Prostate gland (tissue), 2 donors: ENCODE measurements at regions of chr4 and their contacts with region 1.

Region 1: DNA sequence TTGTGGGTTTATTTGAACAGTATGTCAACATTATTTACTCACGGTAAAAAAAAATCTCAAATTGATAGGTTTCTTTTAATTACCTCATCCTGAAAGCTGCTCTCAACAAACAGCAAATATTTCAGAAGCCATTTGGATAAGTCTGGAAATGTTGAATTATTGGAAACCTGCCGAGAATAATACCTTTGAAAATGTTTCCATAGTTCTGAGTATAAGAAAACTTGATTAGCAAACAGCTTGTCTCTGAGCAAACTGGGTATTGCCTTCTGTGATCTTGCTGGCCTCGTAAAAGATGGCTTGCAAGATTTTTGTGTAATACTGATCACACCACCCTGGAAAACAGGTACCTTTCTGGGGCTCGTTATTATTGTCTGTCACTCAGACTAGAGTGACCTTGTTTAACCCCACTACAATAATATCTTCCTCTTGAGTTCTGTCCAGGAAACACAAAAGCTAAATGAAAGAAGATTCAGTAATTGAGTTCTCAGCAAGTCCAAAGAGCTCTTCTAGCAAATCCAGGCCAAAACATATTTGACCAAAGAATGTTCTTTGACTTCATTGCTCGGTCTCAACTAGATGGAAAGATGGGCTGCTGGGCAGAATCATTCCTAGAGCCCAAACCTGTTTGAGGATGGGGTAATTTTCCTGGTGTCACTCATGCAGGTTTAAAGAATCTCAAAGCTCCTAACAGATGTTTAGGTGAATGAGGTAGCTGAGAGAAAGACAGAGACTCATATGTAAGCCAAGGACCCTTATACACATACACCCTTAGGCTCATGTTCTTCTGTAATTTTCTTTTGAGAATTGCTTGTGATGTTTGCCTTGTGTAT is 255.6 kb upstream of the JADE1 start:
- DNase-seq: peak; percentile 55
- H3K4me3 ChIP-seq: peak overlapping the region; percentile 38 to 40
- H3K27ac ChIP-seq: peak overlapping the region; percentile 89 to 96
- H3K4me1 ChIP-seq: no peaks in the 10 kb centered on the region
- H3K27me3 ChIP-seq: no peaks in the 10 kb centered on the region
- CTCF ChIP-seq: no peak
- POLR2A ChIP-seq: no peak

Region 2: DNA sequence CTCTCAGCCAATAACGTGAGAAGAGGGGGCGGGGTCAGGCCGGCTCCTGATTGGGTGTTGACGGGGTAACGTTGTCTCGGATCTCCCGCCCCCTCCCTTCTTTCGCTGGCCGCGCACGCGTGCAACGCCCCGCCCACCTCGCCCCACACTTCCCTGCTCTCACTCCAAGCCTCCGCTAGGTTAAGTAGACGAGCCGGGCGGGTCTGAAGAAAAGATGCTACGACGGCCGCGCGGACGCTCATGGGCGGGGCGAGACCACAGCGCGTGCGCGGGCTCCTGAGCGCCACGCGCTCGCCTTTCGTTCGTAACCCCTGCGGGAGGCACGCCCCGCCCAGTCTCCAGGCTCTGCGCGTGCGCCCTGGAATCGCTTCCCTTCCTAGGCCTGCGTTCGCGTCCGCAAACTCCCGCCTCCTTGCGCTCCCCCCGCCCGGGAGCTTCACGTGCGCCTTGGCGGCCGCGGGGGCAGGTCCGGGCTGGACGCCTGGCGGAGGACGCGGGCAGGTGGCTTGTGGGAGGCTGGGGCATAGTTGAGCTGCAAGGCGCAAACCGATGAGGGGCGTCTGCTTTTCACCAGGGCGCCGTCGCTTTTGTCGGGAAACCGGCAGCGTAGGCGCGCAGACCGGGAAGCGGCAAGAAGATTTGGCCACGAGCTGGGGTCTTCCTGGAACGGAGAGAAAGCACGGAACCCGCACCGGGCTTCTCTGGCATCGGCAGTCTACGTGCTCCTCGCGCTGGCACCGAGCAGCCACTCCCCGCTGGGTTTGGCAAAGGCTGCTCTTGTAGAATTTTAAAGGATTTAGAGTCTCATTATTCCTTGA is 265.8 kb before region 1 on chr4:
- intact Hi-C with region 1: loop called (anchors 5 kb)
- DNase-seq: peak; percentile 99
- H3K4me3 ChIP-seq: peak overlapping the region; percentile 84 to 89
- H3K27ac ChIP-seq: peak overlapping the region; percentile 90 to 94
- H3K4me1 ChIP-seq: no peaks in the 10 kb centered on the region
- H3K27me3 ChIP-seq: no peaks in the 10 kb centered on the region
- CTCF ChIP-seq: peak in 3 of 4 experiments; percentile 28 to 67 (median 59)
- POLR2A ChIP-seq: peak; percentile 85

Region 3: GRCh38 chr4:128454281-128455075 is 99.4 kb before region 1 on chr4:
- intact Hi-C with region 1: loop called (anchors 5 kb)
- DNase-seq: peak; percentile 78
- H3K4me3 ChIP-seq: no peak overlapping the region
- H3K27ac ChIP-seq: no peak overlapping the region
- H3K4me1 ChIP-seq: no peaks in the 10 kb centered on the region
- H3K27me3 ChIP-seq: no peaks in the 10 kb centered on the region
- CTCF ChIP-seq: peak; percentile 35 to 84 (median 71)
- POLR2A ChIP-seq: no peak

Region 4: GRCh38 chr4:128517739-128518510 is 36.0 kb before region 1 on chr4:
- intact Hi-C with region 1: loop called (anchors 5 kb)
- DNase-seq: no peak
- H3K4me3 ChIP-seq: no peak overlapping the region
- H3K27ac ChIP-seq: no peak overlapping the region
- H3K4me1 ChIP-seq: no peaks in the 10 kb centered on the region
- H3K27me3 ChIP-seq: no peaks in the 10 kb centered on the region
- CTCF ChIP-seq: no peak
- POLR2A ChIP-seq: no peak

Region 5: GRCh38 chr4:128686032-128686465 is 132.1 kb after region 1 on chr4:
- intact Hi-C with region 1: no loop called
- DNase-seq: no peak
- H3K4me3 ChIP-seq: no peak overlapping the region
- H3K27ac ChIP-seq: no peak overlapping the region
- H3K4me1 ChIP-seq: no peaks in the 10 kb centered on the region
- H3K27me3 ChIP-seq: no peaks in the 10 kb centered on the region
- CTCF ChIP-seq: no peak
- POLR2A ChIP-seq: no peak

Region 6: DNA sequence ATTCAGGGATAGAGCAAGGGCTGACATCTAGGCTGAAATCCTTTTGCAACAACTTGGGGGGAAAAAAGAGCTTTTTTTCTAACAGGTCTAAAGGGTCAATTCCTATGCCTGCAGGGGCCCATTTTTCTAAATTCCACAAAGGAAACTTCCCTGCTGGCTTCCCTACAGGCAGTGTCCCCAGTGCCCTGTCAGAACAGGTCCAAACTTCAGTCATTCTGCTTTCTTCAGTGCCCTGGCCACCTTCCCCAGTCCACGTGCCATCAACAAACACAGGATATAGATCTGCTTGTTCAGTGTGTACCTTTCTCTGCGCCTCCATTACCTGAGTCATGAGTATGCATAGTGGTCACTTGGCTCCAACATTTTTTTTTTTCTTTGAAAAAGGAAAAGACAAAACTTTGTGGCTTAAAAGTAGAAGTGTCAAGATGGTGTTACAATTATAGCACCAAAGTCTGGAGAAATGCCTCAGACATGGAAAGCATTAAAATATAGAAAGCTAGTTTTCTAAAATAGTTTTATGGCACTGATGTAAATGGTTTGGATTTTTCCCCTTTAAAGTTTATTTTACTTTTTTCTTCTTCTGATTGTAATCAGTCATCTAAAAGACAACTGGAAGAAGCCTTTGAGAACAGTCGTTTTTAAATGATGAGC is 171.6 kb after region 1 on chr4:
- intact Hi-C with region 1: no loop called
- DNase-seq: peak; percentile 44
- H3K4me3 ChIP-seq: no peak overlapping the region
- H3K27ac ChIP-seq: no peak overlapping the region
- H3K4me1 ChIP-seq: no peaks in the 10 kb centered on the region
- H3K27me3 ChIP-seq: no peaks in the 10 kb centered on the region
- CTCF ChIP-seq: no peak
- POLR2A ChIP-seq: no peak